Activated T-helper 1 cell treated with anti-CD3 and anti-CD28 coated beads, Interleukin-12 subunit alpha, Interleukin-12 subunit beta, Interleukin-2, Interleukin-4 antibody, amounts not matched to agents 30 ng/mL and 10 ng/mL and 1 ng/mL, durations not matched to agents 14 hours and 24 hours and 36 hours (primary cell): ENCODE measurements at regions of chr12 and their contacts with region 1.

Region 1: DNA sequence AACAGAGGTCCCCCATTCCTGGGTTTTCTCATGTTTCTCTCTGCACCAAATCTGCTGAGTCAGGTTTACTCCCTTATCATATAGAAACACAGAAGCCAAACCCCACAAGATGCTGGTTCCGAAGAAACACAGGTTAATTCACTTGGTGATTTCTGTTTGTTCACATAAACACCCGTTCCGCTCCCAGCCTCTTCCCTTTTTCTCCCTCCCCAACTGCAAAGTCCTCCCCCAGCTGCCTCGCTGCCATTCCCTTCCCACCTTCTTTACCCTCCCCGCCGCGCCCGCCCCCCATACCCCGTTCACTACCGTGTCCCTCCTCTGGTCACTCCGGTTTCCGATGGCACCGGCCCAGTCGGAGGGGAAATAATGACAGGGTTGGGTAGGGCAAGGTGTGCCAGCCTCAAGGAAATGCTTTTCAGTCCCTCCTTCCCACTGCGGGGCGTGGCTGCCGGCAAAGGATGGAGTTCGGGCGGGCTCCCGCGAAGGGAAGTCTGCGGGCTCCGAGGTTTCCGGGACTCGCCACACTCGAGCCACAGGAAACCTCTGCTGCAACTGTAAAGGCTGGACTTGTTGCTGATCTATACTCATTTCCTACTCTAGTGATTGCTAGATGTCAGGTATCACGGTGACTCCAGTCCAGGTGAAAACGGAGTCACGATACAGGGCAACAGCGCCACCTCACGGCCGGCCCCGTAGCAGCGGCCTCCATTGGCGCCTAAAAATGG is at the start of gene STYK1:
- DNase-seq: peak; percentile 73
- H3K4me3 Mint-ChIP-seq: peak within 1 kb of the TSS; percentile 86
- H3K27ac Mint-ChIP-seq: peak within 1 kb of the TSS; percentile 72
- H3K4me1 Mint-ChIP-seq: peaks cover 74% of the 10 kb centered on the region
- H3K27me3 Mint-ChIP-seq: peaks cover 35% of the 10 kb centered on the region
- total RNA-seq, gene STYK1: 0.34 TPM in 1 of 2 replicates, not detected in the other

Region 2: GRCh38 chr12:10212201-10213131 is 461.4 kb before region 1 on chr12 and contains the start of gene GABARAPL1:
- intact Hi-C with region 1: loop called (anchors 1 kb)
- DNase-seq: peak; percentile 76
- H3K4me3 Mint-ChIP-seq: peak within 1 kb of the TSS; percentile 84
- H3K27ac Mint-ChIP-seq: peak within 1 kb of the TSS; percentile 93
- H3K4me1 Mint-ChIP-seq: peaks cover 32% of the 10 kb centered on the region
- H3K27me3 Mint-ChIP-seq: peaks cover 23% of the 10 kb centered on the region
- total RNA-seq, gene GABARAPL1: 5.0 and 6.6 TPM in 2 replicates

Region 3: DNA sequence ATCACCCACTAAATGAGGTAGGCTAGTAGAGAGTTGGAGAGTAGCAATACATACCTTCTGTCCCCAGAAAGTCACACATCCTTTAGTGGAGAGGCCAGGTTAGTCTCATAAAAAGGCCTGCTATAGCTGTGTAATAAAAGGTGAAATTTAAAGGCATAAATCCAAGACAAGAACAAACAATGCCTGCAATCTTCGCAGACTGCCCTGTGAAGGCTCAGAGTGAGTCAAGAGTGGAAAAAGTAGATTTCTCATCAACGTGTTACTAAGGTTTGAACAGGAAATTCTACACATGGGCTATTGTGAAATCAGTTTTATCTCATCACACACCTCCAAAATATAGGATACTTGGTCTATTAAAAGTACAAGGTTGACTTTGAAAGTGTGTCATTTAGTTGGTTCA is 220.7 kb before region 1 on chr12 and contains the start of gene KLRC1:
- intact Hi-C with region 1: no loop called
- DNase-seq: no peak
- H3K4me3 Mint-ChIP-seq: no peak within 1 kb of the TSS
- H3K27ac Mint-ChIP-seq: no peak within 1 kb of the TSS
- H3K4me1 Mint-ChIP-seq: no peaks in the 10 kb centered on the region
- H3K27me3 Mint-ChIP-seq: peaks cover 3% of the 10 kb centered on the region
- total RNA-seq, gene KLRC1: 0.12 and 0.18 TPM in 2 replicates

Region 4: GRCh38 chr12:10540776-10541205 is 133.0 kb before region 1 on chr12:
- intact Hi-C with region 1: no loop called
- DNase-seq: no peak
- H3K4me3 Mint-ChIP-seq: no peak overlapping the region
- H3K27ac Mint-ChIP-seq: peak overlapping the region; percentile 57
- H3K4me1 Mint-ChIP-seq: peaks cover 12% of the 10 kb centered on the region
- H3K27me3 Mint-ChIP-seq: peaks cover 5% of the 10 kb centered on the region

Region 5: DNA sequence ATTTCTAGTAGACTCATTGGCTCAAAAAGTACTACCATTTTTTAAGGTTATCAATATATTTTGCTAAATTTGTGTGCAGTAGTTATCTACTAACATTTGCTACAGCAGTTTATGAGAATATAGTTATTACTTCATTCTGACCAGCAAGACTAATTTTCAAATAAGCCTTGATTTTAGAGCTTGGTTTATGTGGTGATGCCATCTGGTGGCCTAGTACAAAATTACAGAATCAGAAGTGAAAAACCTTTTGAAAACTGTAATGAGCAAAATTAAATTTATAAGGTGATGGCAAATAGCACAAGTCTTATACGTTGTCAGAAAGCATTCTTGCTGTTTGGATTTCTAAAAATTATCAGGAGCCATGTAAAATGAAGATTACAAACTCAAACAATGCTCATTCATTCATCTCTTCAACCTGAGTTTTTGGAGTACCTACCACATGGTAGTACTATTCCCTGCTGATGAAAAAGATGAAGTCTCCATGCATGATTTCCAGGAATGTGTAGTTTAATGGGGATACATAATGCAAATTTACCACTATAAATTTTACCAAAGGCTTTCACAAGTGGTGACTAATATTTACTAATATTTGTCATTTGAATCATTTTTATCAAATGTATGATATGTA is 111.4 kb before region 1 on chr12:
- intact Hi-C with region 1: loop called (anchors 2 kb)
- DNase-seq: no peak
- H3K4me3 Mint-ChIP-seq: no peak overlapping the region
- H3K27ac Mint-ChIP-seq: no peak overlapping the region
- H3K4me1 Mint-ChIP-seq: peaks cover 4% of the 10 kb centered on the region
- H3K27me3 Mint-ChIP-seq: peaks cover 38% of the 10 kb centered on the region

Region 6: GRCh38 chr12:10701131-10701681 is 27.4 kb after region 1 on chr12:
- intact Hi-C with region 1: loop called (anchors 2 kb)
- DNase-seq: no peak
- H3K4me3 Mint-ChIP-seq: peak overlapping the region; percentile 4
- H3K27ac Mint-ChIP-seq: peak overlapping the region; percentile 15
- H3K4me1 Mint-ChIP-seq: peaks cover 17% of the 10 kb centered on the region
- H3K27me3 Mint-ChIP-seq: no peaks in the 10 kb centered on the region

Region 7: DNA sequence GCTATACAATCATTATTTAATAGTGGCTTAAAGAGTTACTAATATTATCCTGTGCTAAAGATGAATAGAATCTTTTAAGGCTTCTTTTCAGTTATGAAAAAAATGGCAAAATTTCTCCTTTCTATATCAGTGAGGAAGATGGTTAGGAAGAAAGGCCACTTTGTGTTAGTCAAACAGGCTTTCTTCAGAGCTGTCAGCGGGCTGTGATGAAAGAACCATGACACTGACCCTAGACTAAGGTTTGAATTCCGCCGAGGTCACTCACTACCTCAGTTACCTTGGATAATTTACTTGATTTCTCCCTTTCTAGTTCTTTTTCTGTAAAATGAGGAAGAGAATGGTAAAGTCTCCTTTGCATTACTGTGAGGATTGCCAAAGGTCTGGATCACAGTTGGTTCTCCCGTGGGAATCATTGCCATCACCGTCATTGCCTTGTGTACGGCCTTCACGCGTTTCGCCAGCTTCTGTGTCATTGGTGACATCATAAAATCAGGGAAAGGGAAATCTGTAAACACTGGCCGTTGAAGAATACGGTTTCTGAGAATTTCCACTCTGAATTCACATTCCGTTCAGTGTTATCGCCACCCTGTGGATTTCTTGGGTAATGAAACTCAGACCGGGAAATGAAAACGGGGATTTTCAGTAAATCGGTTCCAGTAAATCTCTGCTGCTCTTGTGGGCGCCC is 76.0 kb after region 1 on chr12:
- intact Hi-C with region 1: loop called (anchors 1 kb)
- DNase-seq: peak; percentile 66
- H3K4me3 Mint-ChIP-seq: peak overlapping the region; percentile 62
- H3K27ac Mint-ChIP-seq: peak overlapping the region; percentile 34
- H3K4me1 Mint-ChIP-seq: peaks cover 36% of the 10 kb centered on the region
- H3K27me3 Mint-ChIP-seq: peaks cover 24% of the 10 kb centered on the region

Region 8: GRCh38 chr12:10783252-10783651 is 109.4 kb after region 1 on chr12:
- intact Hi-C with region 1: no loop called
- DNase-seq: no peak
- H3K4me3 Mint-ChIP-seq: no peak overlapping the region
- H3K27ac Mint-ChIP-seq: no peak overlapping the region
- H3K4me1 Mint-ChIP-seq: no peaks in the 10 kb centered on the region
- H3K27me3 Mint-ChIP-seq: peaks cover 5% of the 10 kb centered on the region